HCT116 (cell line): ENCODE measurements at regions of chr1 and their contacts with region 1.

Region 1: DNA sequence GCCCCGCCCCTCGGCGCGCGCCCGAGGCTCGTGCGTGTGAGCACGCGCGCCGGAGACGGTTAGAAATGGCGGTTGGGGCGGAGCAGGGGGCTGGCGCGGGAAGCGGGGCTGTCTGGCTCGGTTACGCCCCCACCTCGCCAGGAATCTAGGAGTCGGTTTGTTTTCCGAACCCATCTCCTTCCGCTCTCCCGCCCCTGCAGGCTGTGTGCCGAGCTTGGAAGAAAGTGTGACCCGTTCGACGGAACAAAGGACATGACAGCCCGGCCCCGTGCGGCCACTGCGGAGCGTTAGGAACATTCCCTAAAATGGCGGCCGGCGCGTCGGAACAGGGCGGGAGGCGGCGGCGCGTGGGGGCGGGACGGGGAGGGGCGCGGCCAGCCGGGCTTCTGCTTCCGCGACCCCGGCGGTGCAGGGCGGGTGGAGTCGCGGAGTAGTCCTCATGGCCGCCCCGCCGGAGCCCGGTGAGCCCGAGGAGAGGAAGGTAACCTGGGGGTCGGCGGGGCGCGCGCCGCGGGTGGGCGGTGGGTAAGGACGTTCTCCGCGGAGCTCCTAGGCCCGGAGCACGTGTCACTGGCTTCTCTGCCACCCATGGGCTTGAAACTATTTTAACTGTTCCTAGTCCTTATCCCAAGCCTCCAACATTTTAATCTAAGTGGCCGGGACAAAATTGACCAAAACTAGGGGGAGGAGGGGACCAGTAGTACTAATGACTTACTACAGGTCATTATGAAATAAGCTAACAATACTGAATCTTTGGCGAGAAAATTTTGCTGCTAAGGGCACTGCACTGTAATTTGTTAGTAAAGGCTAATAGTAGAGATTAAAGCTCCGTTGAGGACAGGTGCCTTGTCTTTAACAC is at the start of gene COX20:
- DNase-seq: peak; percentile 71
- ATAC-seq: peak; percentile 74
- H3K4me3 ChIP-seq: peak within 1 kb of the TSS; percentile 88 to 91
- H3K27ac ChIP-seq: peak within 1 kb of the TSS; percentile 89
- H3K4me1 ChIP-seq: peaks cover 18 to 64% of the 10 kb centered on the region in 2 experiments
- H3K27me3 ChIP-seq: no peaks in the 10 kb centered on the region
- CTCF ChIP-seq: no peak
- POLR2A ChIP-seq: peak; percentile 41
- RAD21 ChIP-seq: no peak
- total RNA-seq, gene COX20: 48.1 TPM

Region 2: GRCh38 chr1:244652699-244653466 is 182.6 kb before region 1 on chr1 and contains the start of gene DESI2:
- CTCF ChIA-PET with region 1: no interaction called
- POLR2A ChIA-PET with region 1: no interaction called
- RAD21 ChIA-PET with region 1: no interaction called
- intact Hi-C with region 1: loop called (anchors 2 kb)
- DNase-seq: peak; percentile 98
- ATAC-seq: peak; percentile 94
- H3K4me3 ChIP-seq: peak within 1 kb of the TSS; percentile 59 to 74
- H3K27ac ChIP-seq: peak within 1 kb of the TSS; percentile 82
- H3K4me1 ChIP-seq: peaks cover 5 to 23% of the 10 kb centered on the region in 2 experiments; a peak in 3 of 4 replicates
- H3K27me3 ChIP-seq: no peaks in the 10 kb centered on the region
- CTCF ChIP-seq: peak; percentile 38 to 51 (median 48); a peak in 4 of 6 replicates
- POLR2A ChIP-seq: peak; percentile 82
- RAD21 ChIP-seq: peak; percentile 50
- total RNA-seq, gene DESI2: 44.6 TPM

Region 3: GRCh38 chr1:244849189-244849866 is 13.8 kb after region 1 on chr1:
- CTCF ChIA-PET with region 1: no interaction called
- POLR2A ChIA-PET with region 1: interaction called, 10 read pairs
- RAD21 ChIA-PET with region 1: no interaction called
- intact Hi-C with region 1: no loop called
- DNase-seq: no peak
- ATAC-seq: no peak
- H3K4me3 ChIP-seq: no peak overlapping the region
- H3K27ac ChIP-seq: no peak overlapping the region
- H3K4me1 ChIP-seq: no peaks in the 10 kb centered on the region
- H3K27me3 ChIP-seq: no peaks in the 10 kb centered on the region
- CTCF ChIP-seq: no peak
- POLR2A ChIP-seq: no peak
- RAD21 ChIP-seq: no peak

Region 4: DNA sequence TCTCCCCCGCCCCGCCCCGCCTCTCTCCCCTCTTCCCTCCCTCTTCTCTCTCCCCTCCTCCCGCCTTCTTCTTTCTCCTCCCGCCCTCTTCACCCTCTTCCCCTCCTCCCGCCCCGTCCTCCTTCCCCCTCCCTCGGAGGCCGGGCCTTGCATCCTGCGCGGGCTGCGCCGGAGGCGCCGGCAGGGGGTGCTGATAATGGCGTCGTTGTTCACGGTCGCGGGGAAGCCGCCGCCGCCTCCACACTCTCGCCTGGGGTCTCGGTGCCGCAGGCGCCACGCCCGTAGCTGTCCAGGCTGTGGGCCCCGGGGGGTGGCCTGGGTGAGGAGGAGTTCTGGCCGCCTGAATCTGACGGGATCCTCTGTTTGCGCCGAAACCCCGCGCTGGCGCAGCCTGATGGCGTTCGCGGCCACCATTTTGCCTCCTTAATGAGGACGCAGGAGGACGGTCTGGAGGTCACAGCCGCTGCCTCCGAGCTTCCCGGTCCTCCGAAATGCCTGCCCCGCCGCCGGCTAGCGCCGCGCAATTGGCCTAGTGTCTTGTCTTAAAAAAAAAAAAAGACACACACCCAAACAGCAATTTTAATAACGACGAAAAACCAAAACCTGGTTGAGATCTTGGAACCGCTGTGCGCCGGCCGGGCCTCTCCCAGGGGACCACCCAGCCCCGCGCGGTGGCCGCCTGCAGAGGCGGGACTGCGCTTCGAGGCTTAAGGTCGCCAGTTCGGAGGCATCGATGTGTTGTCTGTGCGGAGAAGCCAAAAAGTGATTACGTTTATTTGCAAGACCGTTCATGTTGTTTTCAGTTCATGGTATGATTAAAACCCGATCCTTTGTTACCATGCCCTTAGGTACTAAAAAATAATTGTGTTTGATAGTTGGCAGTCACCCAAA is 135.4 kb after region 1 on chr1:
- CTCF ChIA-PET with region 1: no interaction called
- POLR2A ChIA-PET with region 1: no interaction called
- RAD21 ChIA-PET with region 1: no interaction called
- intact Hi-C with region 1: loop called (anchors 2 kb)
- DNase-seq: peak; percentile 93
- ATAC-seq: peak; percentile 80
- H3K4me3 ChIP-seq: peak overlapping the region; percentile 60 to 67
- H3K27ac ChIP-seq: peak overlapping the region; percentile 98
- H3K4me1 ChIP-seq: peaks cover 12 to 29% of the 10 kb centered on the region in 2 experiments; a peak in 3 of 4 replicates
- H3K27me3 ChIP-seq: no peaks in the 10 kb centered on the region
- CTCF ChIP-seq: peak; percentile 25 to 57 (median 52); a peak in 4 of 6 replicates
- POLR2A ChIP-seq: no peak
- RAD21 ChIP-seq: no peak; the same call in 1 of the 2 replicates

Region 5: GRCh38 chr1:245142171-245142798 is 306.8 kb after region 1 on chr1:
- CTCF ChIA-PET with region 1: no interaction called
- POLR2A ChIA-PET with region 1: no interaction called
- RAD21 ChIA-PET with region 1: no interaction called
- intact Hi-C with region 1: no loop called
- DNase-seq: no peak
- ATAC-seq: no peak
- H3K4me3 ChIP-seq: no peak overlapping the region
- H3K27ac ChIP-seq: no peak overlapping the region
- H3K4me1 ChIP-seq: no peaks in the 10 kb centered on the region
- H3K27me3 ChIP-seq: peaks cover 12% of the 10 kb centered on the region; the same call in 1 of the 2 replicates
- CTCF ChIP-seq: no peak
- POLR2A ChIP-seq: no peak
- RAD21 ChIP-seq: no peak

Region 6: GRCh38 chr1:246151796-246152434 is 1316.4 kb after region 1 on chr1:
- CTCF ChIA-PET with region 1: no interaction called
- POLR2A ChIA-PET with region 1: no interaction called
- RAD21 ChIA-PET with region 1: no interaction called
- intact Hi-C with region 1: loop called (anchors 10 kb)
- DNase-seq: no peak
- ATAC-seq: 0 out of 2 replicates have a peak, but pooled peaks have one; percentile 26
- H3K4me3 ChIP-seq: no peak overlapping the region
- H3K27ac ChIP-seq: no peak overlapping the region
- H3K4me1 ChIP-seq: peaks cover 36 to 55% of the 10 kb centered on the region in 2 experiments
- H3K27me3 ChIP-seq: no peaks in the 10 kb centered on the region
- CTCF ChIP-seq: peak in 2 of 3 experiments; percentile 25 to 27; a peak in 2 of 6 replicates
- POLR2A ChIP-seq: no peak
- RAD21 ChIP-seq: no peak